IMR-90 (cell line): ENCODE measurements at regions of chr15 and their contacts with region 1.

Region 1: DNA sequence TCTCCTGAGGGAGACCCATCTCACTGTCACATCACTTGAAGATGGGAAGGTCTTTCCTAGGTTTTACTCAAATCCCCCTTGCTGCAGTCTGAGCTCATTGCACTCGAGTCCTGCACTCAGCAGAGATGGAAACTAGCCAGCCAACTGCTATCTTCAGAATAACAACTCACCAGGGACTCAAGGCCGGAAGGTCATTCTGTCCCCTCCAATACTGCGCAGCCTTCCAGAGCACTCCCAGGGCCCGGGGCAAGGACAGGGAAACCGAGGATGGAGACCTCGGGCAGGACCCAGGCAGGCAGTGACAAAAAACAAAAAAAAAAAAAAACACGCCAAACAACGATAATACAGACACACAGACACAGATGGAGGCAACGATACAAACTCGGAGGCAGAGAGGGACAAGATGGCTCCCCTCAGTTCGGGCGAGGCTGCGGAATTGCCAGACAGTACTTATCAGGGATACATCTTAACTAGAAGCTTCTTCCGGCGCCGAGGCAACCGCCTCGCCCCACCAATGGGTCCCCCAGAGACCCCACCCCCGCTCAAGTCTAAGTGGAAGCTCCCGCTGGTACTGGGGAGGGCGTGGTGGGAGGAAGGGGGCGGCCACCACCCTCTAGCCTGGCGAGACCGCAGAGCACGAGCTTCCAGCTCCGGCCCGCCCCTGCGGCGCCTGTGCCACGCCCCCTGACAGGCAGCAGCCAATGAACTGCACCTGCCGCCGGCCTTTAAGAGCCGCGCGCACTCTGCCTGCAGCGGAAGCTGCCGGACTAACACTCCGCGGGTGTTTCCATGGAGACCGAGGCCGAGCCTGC is 7.0 kb upstream of the MAP1A start:
- DNase-seq: peak; percentile 98
- ATAC-seq: peak; percentile 96
- H3K4me3 ChIP-seq: peak overlapping the region; percentile 54
- H3K27ac ChIP-seq: peak overlapping the region; percentile 78
- H3K4me1 ChIP-seq: peaks cover 16% of the 10 kb centered on the region
- H3K27me3 ChIP-seq: no peaks in the 10 kb centered on the region
- CTCF ChIP-seq: peak; percentile 41
- POLR2A ChIP-seq: peak; percentile 35; the same call in 1 of the 2 replicates
- RAD21 ChIP-seq: no peak

Region 2: DNA sequence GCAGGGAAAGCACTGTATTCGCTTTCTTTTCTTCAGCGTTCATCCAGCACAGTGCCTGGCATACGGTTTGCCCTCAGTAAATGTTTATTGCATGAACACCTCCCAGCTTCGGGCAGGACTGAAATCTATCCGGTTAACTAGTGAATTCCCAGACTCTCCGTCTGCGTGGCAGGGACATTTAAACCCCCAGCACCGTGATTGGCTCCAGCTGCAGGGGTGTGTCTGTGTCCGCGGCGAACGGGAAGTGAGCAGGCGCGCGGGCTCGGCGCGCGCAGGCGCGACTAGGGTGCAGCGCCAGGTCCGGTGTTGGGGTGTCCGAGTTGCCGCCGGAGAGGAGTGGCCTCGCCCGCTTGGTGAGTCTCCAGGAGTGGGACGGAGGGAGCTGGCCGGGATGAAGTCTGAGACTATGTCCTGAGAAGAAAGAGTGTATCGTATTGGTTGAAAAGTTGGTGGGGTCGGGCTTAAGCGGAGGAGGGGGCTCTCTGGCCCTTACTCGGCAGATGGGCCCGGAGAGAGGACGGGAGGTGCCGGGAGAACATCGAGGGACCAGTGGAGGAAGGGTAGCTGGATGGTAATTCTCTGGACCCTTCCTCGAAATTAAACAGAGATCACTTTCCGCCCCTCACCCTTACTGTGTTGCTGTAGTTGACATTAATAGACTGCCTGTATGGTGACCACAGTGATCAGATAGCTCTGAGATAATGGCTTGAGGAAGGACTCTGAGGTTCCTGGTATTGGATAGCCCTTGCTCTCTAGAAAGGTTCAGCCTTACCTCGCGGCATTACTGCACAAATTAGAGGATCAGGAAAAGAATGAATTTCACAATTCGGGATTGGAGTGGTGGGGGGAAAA is 1014.8 kb before region 1 on chr15 and contains the start of gene SNAP23:
- CTCF ChIA-PET with region 1: no interaction called
- POLR2A ChIA-PET with region 1: no interaction called
- dilution Hi-C with region 1: no loop called
- in situ Hi-C with region 1: no loop called
- intact Hi-C with region 1: no loop called
- DNase-seq: peak; percentile 96
- ATAC-seq: peak; percentile 92
- H3K4me3 ChIP-seq: peak within 1 kb of the TSS; percentile 83
- H3K27ac ChIP-seq: peak within 1 kb of the TSS; percentile 73
- H3K4me1 ChIP-seq: peaks cover 10% of the 10 kb centered on the region
- H3K27me3 ChIP-seq: no peaks in the 10 kb centered on the region
- CTCF ChIP-seq: no peak
- POLR2A ChIP-seq: peak; percentile 92
- RAD21 ChIP-seq: no peak
- total RNA-seq, gene SNAP23: 36.0 and 72.5 TPM in 2 replicates

Region 3: GRCh38 chr15:42911107-42911506 is 599.3 kb before region 1 on chr15:
- CTCF ChIA-PET with region 1: no interaction called
- POLR2A ChIA-PET with region 1: no interaction called
- dilution Hi-C with region 1: no loop called
- in situ Hi-C with region 1: no loop called
- intact Hi-C with region 1: no loop called
- DNase-seq: peak; percentile 46
- ATAC-seq: peak; percentile 27; the same call in 1 of the 2 replicates
- H3K4me3 ChIP-seq: no peak overlapping the region
- H3K27ac ChIP-seq: no peak overlapping the region
- H3K4me1 ChIP-seq: peaks cover 3% of the 10 kb centered on the region
- H3K27me3 ChIP-seq: no peaks in the 10 kb centered on the region
- CTCF ChIP-seq: no peak
- POLR2A ChIP-seq: no peak
- RAD21 ChIP-seq: no peak

Region 4: GRCh38 chr15:43550527-43551363 is 40.3 kb after region 1 on chr15:
- CTCF ChIA-PET with region 1: no interaction called
- POLR2A ChIA-PET with region 1: no interaction called
- dilution Hi-C with region 1: no loop called
- in situ Hi-C with region 1: no loop called
- intact Hi-C with region 1: no loop called
- DNase-seq: peak; percentile 59
- ATAC-seq: peak; percentile 64
- H3K4me3 ChIP-seq: no peak overlapping the region
- H3K27ac ChIP-seq: no peak overlapping the region
- H3K4me1 ChIP-seq: peaks cover 1% of the 10 kb centered on the region; the same call in 1 of the 2 replicates
- H3K27me3 ChIP-seq: no peaks in the 10 kb centered on the region
- CTCF ChIP-seq: no peak
- POLR2A ChIP-seq: no peak
- RAD21 ChIP-seq: no peak

Region 5: GRCh38 chr15:43735416-43735815 is 225.0 kb after region 1 on chr15:
- CTCF ChIA-PET with region 1: no interaction called
- POLR2A ChIA-PET with region 1: no interaction called
- dilution Hi-C with region 1: no loop called
- in situ Hi-C with region 1: no loop called
- intact Hi-C with region 1: no loop called
- DNase-seq: no peak
- ATAC-seq: no peak
- H3K4me3 ChIP-seq: no peak overlapping the region
- H3K27ac ChIP-seq: no peak overlapping the region
- H3K4me1 ChIP-seq: no peaks in the 10 kb centered on the region
- H3K27me3 ChIP-seq: no peaks in the 10 kb centered on the region; the same call in 1 of the 2 replicates
- CTCF ChIP-seq: no peak
- POLR2A ChIP-seq: no peak
- RAD21 ChIP-seq: no peak

Region 6: DNA sequence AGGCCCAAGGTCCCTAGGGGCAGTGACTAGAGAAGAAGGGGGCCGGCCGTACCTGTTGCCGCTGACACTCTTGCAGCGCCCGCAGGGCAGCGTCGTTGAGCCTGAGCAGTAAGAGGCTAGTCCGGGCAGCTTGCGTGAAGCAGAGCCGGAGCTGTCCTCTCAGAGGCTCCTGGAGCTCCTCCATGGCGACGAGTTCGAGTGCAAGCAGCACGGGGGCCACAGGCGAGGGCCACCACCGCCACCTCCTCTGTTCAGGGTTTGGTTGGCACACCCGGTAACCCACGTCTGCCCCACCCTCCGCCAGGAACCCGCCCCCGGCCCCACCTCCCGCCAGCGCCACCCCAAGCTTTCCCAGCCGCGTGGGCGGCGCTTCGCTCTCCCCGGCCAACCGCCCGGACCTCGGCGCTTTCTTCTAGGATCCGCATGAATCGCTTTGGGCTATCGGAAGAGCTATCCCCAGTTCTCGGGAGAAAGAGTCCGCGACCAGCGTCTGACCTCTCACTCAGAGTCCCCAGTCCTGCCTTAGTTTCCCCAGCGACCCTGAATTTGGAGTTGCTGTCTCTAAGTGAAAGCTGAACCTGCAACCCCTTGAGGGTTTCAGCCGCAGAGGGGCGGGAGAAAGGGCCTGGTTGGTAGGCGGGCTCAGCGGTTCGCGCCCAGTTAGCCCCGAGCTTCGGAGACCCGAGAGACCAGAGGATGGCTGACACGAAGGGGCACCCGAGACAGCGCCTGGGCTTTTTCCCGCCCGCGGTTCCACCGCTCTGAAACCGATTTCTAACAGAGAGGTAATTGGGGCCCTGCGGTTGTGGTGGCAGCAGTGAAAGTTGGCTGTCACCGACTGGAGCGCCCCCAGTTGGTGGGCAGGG is 266.5 kb after region 1 on chr15 and contains the start of gene ELL3:
- CTCF ChIA-PET with region 1: no interaction called
- POLR2A ChIA-PET with region 1: no interaction called
- dilution Hi-C with region 1: no loop called
- in situ Hi-C with region 1: no loop called
- intact Hi-C with region 1: loop called (anchors 10 kb)
- DNase-seq: peak; percentile 59
- ATAC-seq: peak; percentile 88
- H3K4me3 ChIP-seq: peak within 1 kb of the TSS; percentile 74
- H3K27ac ChIP-seq: peak within 1 kb of the TSS; percentile 56
- H3K4me1 ChIP-seq: peaks cover 5% of the 10 kb centered on the region; the same call in 1 of the 2 replicates
- H3K27me3 ChIP-seq: no peaks in the 10 kb centered on the region
- CTCF ChIP-seq: peak; percentile 69
- POLR2A ChIP-seq: no peak
- RAD21 ChIP-seq: peak; percentile 34; the same call in 1 of the 2 replicates
- total RNA-seq, gene ELL3: 1.6 and 1.7 TPM in 2 replicates